ENCODE measurements at regions of chr12 and their contacts with region 1.

Region 1: GRCh38 chr12:27689558-27690180 is 6.6 kb upstream of the REP15 start:
- DNase-seq: no peak
- H3K4me3 ChIP-seq: no peak overlapping the region
- H3K27ac ChIP-seq: no peak overlapping the region
- H3K4me1 ChIP-seq: no peaks in the 10 kb centered on the region
- H3K27me3 ChIP-seq: no peaks in the 10 kb centered on the region
- CTCF ChIP-seq: no peak
- POLR2A ChIP-seq: no peak

Region 2: DNA sequence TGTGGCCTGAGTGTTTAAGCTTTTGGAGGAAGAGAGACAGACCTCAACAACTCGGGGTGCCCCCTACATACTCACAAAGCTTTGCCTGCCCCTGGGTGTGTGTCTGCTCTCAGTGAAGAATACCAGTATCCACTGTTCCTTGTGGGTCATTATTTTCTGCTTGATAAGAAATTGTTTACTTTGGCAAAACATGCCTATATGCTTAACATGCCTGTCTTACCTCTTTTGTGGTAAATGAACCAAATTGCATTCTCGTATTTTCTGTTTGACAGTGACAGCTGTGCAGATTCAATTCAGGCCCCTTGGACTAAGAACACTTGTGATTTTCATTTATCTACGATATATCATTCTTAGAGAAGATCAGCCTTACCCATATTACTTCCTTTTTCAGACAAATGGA is 44.0 kb before region 1 on chr12:
- intact Hi-C with region 1: loop called (anchors 5 kb)
- DNase-seq: no peak
- H3K4me3 ChIP-seq: no peak overlapping the region
- H3K27ac ChIP-seq: no peak overlapping the region
- H3K4me1 ChIP-seq: no peaks in the 10 kb centered on the region
- H3K27me3 ChIP-seq: no peaks in the 10 kb centered on the region
- CTCF ChIP-seq: no peak
- POLR2A ChIP-seq: no peak

Region 3: DNA sequence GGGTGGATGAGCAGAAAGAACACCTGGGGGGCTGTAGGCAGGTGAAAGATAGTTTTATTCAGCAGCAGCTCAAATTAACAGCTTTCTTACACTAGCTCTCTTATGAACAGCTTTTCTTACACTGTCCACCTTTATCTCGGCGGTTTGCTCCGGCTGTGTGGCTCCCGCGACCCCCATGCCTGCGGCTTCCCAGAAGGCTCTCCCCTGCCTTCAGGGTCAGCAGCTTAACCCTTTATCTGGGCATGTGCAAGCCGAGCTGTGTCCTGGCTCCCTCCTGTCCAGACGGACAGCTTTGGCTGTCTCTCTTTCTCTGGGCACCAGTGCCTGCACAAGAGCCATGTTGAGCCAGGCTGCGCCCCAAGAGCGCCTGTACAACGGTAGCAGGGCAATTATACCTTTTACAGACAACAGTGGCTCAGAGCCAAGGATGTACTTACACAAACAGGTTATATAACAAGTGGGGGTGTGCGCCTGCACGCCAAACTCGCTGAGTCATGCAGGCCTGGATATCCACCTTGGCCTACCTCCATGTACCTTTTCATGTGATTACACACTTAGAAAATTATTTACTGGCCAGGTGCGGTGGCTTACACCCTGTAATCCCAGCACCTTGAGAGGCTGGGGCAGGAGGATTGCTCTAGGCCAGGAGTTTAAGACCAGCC is 61.8 kb after region 1 on chr12:
- intact Hi-C with region 1: no loop called
- DNase-seq: no peak
- H3K4me3 ChIP-seq: no peak overlapping the region
- H3K27ac ChIP-seq: no peak overlapping the region
- H3K4me1 ChIP-seq: no peaks in the 10 kb centered on the region
- H3K27me3 ChIP-seq: no peaks in the 10 kb centered on the region
- CTCF ChIP-seq: no peak
- POLR2A ChIP-seq: no peak